Ascending aorta (tissue), 2 donors: ENCODE measurements at regions of chr7 and their contacts with region 1.

Region 1: GRCh38 chr7:141014524-141015395 is at the start of gene MRPS33:
- DNase-seq: peak; percentile 81 to 98
- H3K4me3 ChIP-seq: peak within 1 kb of the TSS; percentile 51 to 72
- H3K27ac ChIP-seq: peak within 1 kb of the TSS; percentile 82 to 87
- H3K4me1 ChIP-seq: peaks cover 3 to 6% of the 10 kb centered on the region in 2 donors
- H3K27me3 ChIP-seq: no peaks in the 10 kb centered on the region
- CTCF ChIP-seq: peak in 2 of 3 experiments; percentile 30 to 50
- total RNA-seq, gene MRPS33: 8.9 TPM

Region 2: DNA sequence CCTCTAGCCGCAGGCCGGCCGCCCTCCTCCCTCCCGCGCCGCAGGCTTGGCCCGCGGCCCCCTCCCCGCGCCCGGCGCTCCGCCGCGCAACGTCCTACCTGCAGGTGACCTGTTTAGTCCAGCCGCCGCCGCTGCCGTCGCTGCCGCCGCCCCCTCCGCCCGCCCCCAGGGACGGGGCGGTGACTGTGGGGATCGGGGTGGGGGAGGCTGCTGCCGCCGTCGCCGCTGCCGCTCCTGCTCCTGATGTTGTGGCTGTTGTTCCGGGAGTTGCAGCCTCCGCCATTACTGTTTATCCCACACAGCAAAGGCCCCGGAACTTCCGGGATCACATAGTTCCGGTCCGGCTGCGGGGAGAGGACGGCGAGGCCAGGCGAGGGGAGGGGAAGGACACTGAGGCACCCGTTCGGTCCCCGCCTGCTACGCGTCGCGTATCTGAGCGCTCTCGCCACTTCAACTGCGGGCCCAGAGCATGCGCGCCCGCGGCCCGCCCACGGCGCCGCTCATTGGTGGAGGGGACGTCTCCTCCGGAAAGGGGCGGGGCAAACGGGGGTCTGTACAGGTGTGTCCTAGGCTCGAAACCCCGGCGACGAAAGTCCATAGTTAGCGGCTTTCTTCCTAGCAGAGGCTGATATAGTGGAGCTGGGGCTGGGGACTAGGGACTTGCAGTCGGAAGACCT is 535.6 kb before region 1 on chr7 and contains the start of gene MKRN1:
- intact Hi-C with region 1: loop called (anchors 10 kb)
- DNase-seq: peak; percentile 80 to 96
- H3K4me3 ChIP-seq: peak within 1 kb of the TSS; percentile 90 to 93
- H3K27ac ChIP-seq: peak within 1 kb of the TSS; percentile 73 to 87
- H3K4me1 ChIP-seq: peaks cover 5 to 20% of the 10 kb centered on the region in 2 donors
- H3K27me3 ChIP-seq: no peaks in the 10 kb centered on the region
- CTCF ChIP-seq: no peak
- total RNA-seq, gene MKRN1: 20.6 TPM

Region 3: DNA sequence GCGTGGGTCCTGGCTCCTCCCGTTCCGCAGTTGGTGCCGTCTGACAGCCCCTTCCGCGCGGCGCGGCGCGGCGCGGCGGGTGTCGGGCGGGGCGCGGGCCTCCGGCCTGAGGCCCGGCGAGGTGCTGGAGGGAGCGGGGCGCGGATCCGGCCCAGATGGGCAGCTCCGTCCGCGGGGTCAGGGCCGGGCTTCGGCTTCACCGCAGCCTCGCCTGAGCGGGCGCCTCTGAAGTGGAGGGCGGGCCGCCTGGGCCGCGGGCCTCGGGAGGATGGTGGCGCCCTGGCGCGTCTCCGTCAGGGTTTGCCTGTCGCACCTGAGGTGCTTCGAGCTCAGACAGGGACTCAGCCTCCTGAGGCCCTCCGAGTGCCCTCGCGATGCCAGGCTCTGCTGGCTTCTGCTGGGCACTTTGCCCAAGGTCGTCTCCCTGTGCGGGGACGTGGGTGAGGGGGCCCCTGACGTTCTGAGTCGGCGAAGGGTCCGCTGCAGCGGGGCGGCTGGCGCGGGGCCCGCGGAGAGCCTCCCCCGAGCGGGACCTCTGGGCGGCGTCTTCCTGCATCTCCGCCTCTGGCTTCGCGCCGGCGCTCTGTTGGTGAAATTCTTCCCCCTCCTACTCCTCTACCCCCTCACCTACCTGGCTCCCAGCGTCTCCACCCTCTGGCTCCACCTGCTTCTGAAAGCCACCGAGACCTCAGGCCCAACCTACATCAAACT is 341.5 kb before region 1 on chr7:
- intact Hi-C with region 1: loop called (anchors 2 kb)
- DNase-seq: peak in 1 of 2 donors; percentile 67
- H3K4me3 ChIP-seq: peak overlapping the region; percentile 95 to 99
- H3K27ac ChIP-seq: peak overlapping the region; percentile 83 to 87
- H3K4me1 ChIP-seq: peaks cover 0 to 15% of the 10 kb centered on the region in 2 donors
- H3K27me3 ChIP-seq: no peaks in the 10 kb centered on the region
- CTCF ChIP-seq: no peak

Region 4: DNA sequence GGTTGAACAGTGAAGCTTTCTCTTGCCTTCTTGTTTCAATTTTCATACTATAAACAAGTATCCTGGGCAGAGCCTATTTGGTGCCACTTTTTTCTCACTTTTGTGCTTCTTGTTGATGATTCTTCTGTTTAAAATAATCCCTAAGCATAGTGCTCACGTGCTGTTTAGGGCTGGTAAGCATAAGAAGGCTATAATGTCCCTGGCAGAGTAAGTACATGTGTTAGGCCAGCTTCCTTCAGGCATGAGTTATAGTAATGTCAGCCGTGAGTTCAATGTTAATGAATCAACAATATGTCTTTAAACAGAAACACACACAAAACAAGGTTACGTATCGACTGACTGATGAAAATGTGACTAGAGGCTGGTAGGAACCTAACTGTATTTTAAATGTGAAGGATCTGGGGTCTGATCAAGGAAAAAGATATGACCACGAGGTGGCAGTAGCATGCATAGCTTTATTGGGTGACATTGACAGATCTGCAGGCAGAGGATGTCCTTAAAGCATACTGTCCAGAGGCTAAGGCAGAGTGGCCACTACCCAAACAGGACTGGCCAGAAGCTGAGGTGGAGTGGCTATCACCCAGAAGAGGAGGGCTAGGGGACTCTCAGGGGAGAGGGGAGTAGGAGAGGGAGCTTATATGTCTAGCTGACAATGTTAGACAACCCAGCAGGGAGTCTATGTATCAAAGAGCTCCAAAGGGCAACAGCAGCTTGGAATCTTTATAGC is 203.8 kb before region 1 on chr7:
- intact Hi-C with region 1: loop called (anchors 1 kb)
- DNase-seq: peak in 1 of 2 donors; percentile 73
- H3K4me3 ChIP-seq: no peak overlapping the region
- H3K27ac ChIP-seq: no peak overlapping the region
- H3K4me1 ChIP-seq: no peaks in the 10 kb centered on the region
- H3K27me3 ChIP-seq: no peaks in the 10 kb centered on the region
- CTCF ChIP-seq: peak; percentile 45 to 79 (median 58)

Region 5: GRCh38 chr7:140989068-140989467 is 25.7 kb before region 1 on chr7:
- intact Hi-C with region 1: no loop called
- DNase-seq: no peak
- H3K4me3 ChIP-seq: no peak overlapping the region
- H3K27ac ChIP-seq: no peak overlapping the region
- H3K4me1 ChIP-seq: no peaks in the 10 kb centered on the region
- H3K27me3 ChIP-seq: no peaks in the 10 kb centered on the region
- CTCF ChIP-seq: no peak